Naive thymus-derived CD4-positive, alpha-beta T cell (primary cell): ENCODE measurements at regions of chr4 and their contacts with region 1.

Region 1: GRCh38 chr4:128191115-128191781 is 96.4 kb downstream of the PGRMC2 start:
- DNase-seq: peak; percentile 29 to 70 (median 61)
- ATAC-seq: peak; percentile 98
- H3K4me3 ChIP-seq: no peak overlapping the region
- H3K4me3 Mint-ChIP-seq: no peak overlapping the region
- H3K27ac ChIP-seq: no peak overlapping the region
- H3K27ac Mint-ChIP-seq: no peak overlapping the region
- H3K4me1 ChIP-seq: no peaks in the 10 kb centered on the region
- H3K4me1 Mint-ChIP-seq: peaks cover 2 to 11% (median 6%) of the 10 kb centered on the region in 7 donors
- H3K27me3 ChIP-seq: no peaks in the 10 kb centered on the region
- H3K27me3 Mint-ChIP-seq: no peaks in the 10 kb centered on the region

Region 2: GRCh38 chr4:128287871-128288688 is 96.8 kb after region 1 on chr4:
- CTCF ChIA-PET with region 1: no interaction called
- POLR2A ChIA-PET with region 1: no interaction called
- intact Hi-C with region 1: loop called (anchors 1 to 2 kb)
- DNase-seq: peak; percentile 97 to 100 (median 98)
- ATAC-seq: peak; percentile 90
- H3K4me3 ChIP-seq: peak overlapping the region; percentile 88
- H3K4me3 Mint-ChIP-seq: peak overlapping the region; percentile 81 to 98 (median 87)
- H3K27ac ChIP-seq: peak overlapping the region; percentile 98
- H3K27ac Mint-ChIP-seq: peak overlapping the region; percentile 82 to 99 (median 96)
- H3K4me1 ChIP-seq: peaks cover 12 to 25% of the 10 kb centered on the region in 2 donors
- H3K4me1 Mint-ChIP-seq: peaks cover 26 to 50% (median 46%) of the 10 kb centered on the region in 7 donors
- H3K27me3 ChIP-seq: no peaks in the 10 kb centered on the region
- H3K27me3 Mint-ChIP-seq: no peaks in the 10 kb centered on the region

Region 3: DNA sequence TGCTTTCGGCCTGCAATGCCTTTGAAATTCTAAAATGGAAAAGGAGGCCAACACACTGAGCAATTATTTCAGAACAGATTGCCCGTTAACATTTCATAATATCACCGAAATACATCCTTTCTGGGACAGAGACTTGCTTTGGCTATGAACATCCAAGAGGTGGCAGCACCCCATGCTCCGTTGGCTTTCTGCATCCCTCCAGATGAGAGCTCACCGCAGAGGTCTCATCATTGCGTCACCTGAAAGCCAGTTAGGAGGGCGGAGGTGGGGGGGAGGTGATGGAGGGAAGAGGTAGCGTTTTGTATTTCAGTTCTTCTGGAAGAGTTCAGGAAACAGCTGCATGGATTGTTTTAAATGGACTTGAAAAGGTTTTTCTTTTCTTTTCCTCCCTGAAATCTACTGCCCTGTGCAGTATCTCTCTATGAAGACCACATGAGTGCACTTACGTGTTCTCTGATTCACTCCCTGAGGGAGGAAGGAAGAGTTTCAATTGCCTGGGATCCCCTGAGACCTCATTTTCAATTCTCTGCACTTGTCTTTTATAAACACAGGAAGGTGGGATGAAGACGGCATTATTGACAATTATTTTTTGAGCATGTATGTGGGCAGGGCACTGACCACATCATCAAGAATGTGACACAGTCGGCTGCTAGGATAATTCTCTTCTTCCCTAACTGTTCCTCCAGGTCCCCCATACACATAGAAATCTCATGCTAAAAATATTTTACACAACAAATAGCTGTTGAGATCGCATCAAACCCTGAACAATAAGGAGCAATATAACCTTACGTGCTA is 263.2 kb after region 1 on chr4:
- CTCF ChIA-PET with region 1: no interaction called
- POLR2A ChIA-PET with region 1: no interaction called
- intact Hi-C with region 1: loop called (anchors 1 kb)
- DNase-seq: peak; percentile 16 to 68 (median 49)
- ATAC-seq: peak; percentile 92
- H3K4me3 ChIP-seq: no peak overlapping the region
- H3K4me3 Mint-ChIP-seq: no peak overlapping the region
- H3K27ac ChIP-seq: no peak overlapping the region
- H3K27ac Mint-ChIP-seq: peak overlapping the region in 1 of 9 donors; percentile 47
- H3K4me1 ChIP-seq: no peaks in the 10 kb centered on the region
- H3K4me1 Mint-ChIP-seq: peaks cover 0 to 11% (median 0%) of the 10 kb centered on the region in 7 donors
- H3K27me3 ChIP-seq: no peaks in the 10 kb centered on the region
- H3K27me3 Mint-ChIP-seq: no peaks in the 10 kb centered on the region

Region 4: GRCh38 chr4:128782076-128782715 is 590.9 kb after region 1 on chr4:
- CTCF ChIA-PET with region 1: no interaction called
- POLR2A ChIA-PET with region 1: no interaction called
- intact Hi-C with region 1: loop called in 1 of 2 experiments (anchors 1 kb)
- DNase-seq: peak in 8 of 9 donors; percentile 11 to 66 (median 58)
- ATAC-seq: peak; percentile 77
- H3K4me3 ChIP-seq: no peak overlapping the region
- H3K4me3 Mint-ChIP-seq: no peak overlapping the region
- H3K27ac ChIP-seq: no peak overlapping the region
- H3K27ac Mint-ChIP-seq: no peak overlapping the region
- H3K4me1 ChIP-seq: no peaks in the 10 kb centered on the region
- H3K4me1 Mint-ChIP-seq: no peaks in the 10 kb centered on the region
- H3K27me3 ChIP-seq: no peaks in the 10 kb centered on the region
- H3K27me3 Mint-ChIP-seq: peaks cover 0 to 8% (median 4%) of the 10 kb centered on the region in 5 donors

Region 5: GRCh38 chr4:129093191-129093920 is 902.1 kb after region 1 on chr4 and contains the start of gene SCLT1:
- CTCF ChIA-PET with region 1: no interaction called
- POLR2A ChIA-PET with region 1: no interaction called
- intact Hi-C with region 1: loop called in 1 of 2 experiments (anchors 10 kb)
- DNase-seq: peak; percentile 89 to 97 (median 94)
- ATAC-seq: peak; percentile 96
- H3K4me3 ChIP-seq: peak within 1 kb of the TSS; percentile 83
- H3K4me3 Mint-ChIP-seq: peak within 1 kb of the TSS in 5 of 10 donors; percentile 33 to 65 (median 50)
- H3K27ac ChIP-seq: peak within 1 kb of the TSS; percentile 95
- H3K27ac Mint-ChIP-seq: peak within 1 kb of the TSS in 4 of 9 donors; percentile 33 to 76 (median 50)
- H3K4me1 ChIP-seq: peaks cover 26 to 30% of the 10 kb centered on the region in 2 donors
- H3K4me1 Mint-ChIP-seq: peaks cover 16 to 57% (median 43%) of the 10 kb centered on the region in 7 donors
- H3K27me3 ChIP-seq: no peaks in the 10 kb centered on the region
- H3K27me3 Mint-ChIP-seq: no peaks in the 10 kb centered on the region
- total RNA-seq, gene SCLT1: 21.4 to 36.4 (median 26.9) TPM

Region 6: DNA sequence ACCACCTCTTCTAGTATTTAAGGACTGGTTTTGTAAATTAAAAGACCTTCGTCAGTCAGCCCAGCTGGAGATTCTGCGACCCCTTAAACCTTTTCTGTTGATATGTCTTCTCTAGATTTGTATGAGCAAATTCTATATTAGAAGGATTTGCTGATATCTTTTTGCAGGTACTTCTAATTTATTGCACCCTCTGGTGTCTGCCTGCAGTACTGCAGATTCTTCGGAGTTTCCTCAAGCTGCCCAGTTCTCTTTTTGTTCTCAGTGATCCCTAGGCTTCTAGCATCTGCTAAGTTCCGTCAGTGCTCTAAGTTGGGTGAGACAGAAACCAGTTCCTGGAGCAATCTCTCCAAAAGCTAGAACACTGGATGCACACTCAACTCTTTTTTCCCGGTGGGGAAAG is 1449.9 kb after region 1 on chr4:
- CTCF ChIA-PET with region 1: no interaction called
- POLR2A ChIA-PET with region 1: no interaction called
- intact Hi-C with region 1: loop called in 1 of 2 experiments (anchors 2 kb)
- DNase-seq: peak in 6 of 9 donors; percentile 4 to 47 (median 33)
- ATAC-seq: peak; percentile 63
- H3K4me3 ChIP-seq: no peak overlapping the region
- H3K4me3 Mint-ChIP-seq: no peak overlapping the region
- H3K27ac ChIP-seq: no peak overlapping the region
- H3K27ac Mint-ChIP-seq: no peak overlapping the region
- H3K4me1 ChIP-seq: no peaks in the 10 kb centered on the region
- H3K4me1 Mint-ChIP-seq: no peaks in the 10 kb centered on the region
- H3K27me3 ChIP-seq: no peaks in the 10 kb centered on the region
- H3K27me3 Mint-ChIP-seq: peaks cover 0 to 6% (median 0%) of the 10 kb centered on the region in 5 donors